Activated CD4-positive, alpha-beta T cell treated with anti-CD3 and anti-CD28 coated beads, Interleukin-2, amount 10 ng/mL, durations not matched to agents 24 days and 14 days (primary cell): ENCODE measurements at regions of chr12 and their contacts with region 1.

Region 1: GRCh38 chr12:94282675-94283074 is 134.3 kb downstream of the PLXNC1 start:
- DNase-seq: peak; percentile 82
- H3K4me3 Mint-ChIP-seq: peak overlapping the region; percentile 59
- H3K27ac Mint-ChIP-seq: peak overlapping the region; percentile 74
- H3K4me1 Mint-ChIP-seq: peaks cover 28% of the 10 kb centered on the region
- H3K27me3 Mint-ChIP-seq: no peaks in the 10 kb centered on the region

Region 2: GRCh38 chr12:94297876-94298505 is 15.3 kb after region 1 on chr12:
- intact Hi-C with region 1: loop called (anchors 2 kb)
- DNase-seq: no peak
- H3K4me3 Mint-ChIP-seq: no peak overlapping the region
- H3K27ac Mint-ChIP-seq: no peak overlapping the region
- H3K4me1 Mint-ChIP-seq: peaks cover 13% of the 10 kb centered on the region
- H3K27me3 Mint-ChIP-seq: no peaks in the 10 kb centered on the region